CD8-positive, alpha-beta T cell (primary cell): ENCODE measurements at regions of chr9 and their contacts with region 1.

Region 1: GRCh38 chr9:19239955-19240354 is 9.5 kb downstream of the DENND4C start:
- DNase-seq: no peak
- ATAC-seq: no peak
- H3K4me3 ChIP-seq: no peak overlapping the region
- H3K4me3 Mint-ChIP-seq: no peak overlapping the region
- H3K27ac ChIP-seq: no peak overlapping the region
- H3K27ac Mint-ChIP-seq: no peak overlapping the region
- H3K4me1 ChIP-seq: no peaks in the 10 kb centered on the region
- H3K4me1 Mint-ChIP-seq: peaks cover 54% of the 10 kb centered on the region
- H3K27me3 ChIP-seq: no peaks in the 10 kb centered on the region
- H3K27me3 Mint-ChIP-seq: no peaks in the 10 kb centered on the region
- CTCF ChIP-seq: no peak

Region 2: DNA sequence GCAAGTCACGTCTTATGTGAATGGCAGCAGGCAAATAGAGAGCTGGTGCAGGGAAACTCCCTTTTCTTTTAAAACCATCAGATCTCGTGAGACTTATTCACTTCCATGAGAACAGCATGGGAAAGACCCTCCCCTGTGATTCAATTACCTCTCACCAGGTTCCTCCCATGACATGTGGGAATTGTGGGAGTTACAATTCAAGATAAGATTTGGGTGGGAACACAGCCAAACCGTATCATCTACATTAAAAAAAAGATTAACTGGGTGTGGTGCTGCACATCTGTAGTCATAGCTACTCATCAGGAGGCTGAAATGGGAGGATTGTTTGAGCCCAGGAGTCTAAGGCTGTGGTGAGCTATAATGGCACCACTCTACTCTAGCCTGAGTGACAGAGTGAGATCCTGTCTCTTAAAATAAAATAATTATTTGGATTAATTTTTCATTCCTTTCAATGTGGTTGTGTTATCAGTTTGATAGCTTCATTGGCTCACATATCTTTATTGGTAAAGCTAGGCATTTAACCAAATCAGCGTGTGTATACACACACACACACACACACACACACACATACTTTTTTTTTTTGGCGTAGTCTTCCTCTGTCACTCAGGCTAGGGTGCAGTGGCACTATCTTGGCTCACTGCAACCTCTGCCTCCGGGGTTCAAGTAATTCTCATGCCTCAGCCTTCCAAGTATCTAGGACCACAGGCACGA is 12.4 kb after region 1 on chr9:
- CTCF ChIA-PET with region 1: interaction called, 4 read pairs
- POLR2A ChIA-PET with region 1: interaction called, 6 read pairs
- intact Hi-C with region 1: loop called in 1 of 2 experiments (anchors 2 kb)
- DNase-seq: no peak
- ATAC-seq: no peak
- H3K4me3 ChIP-seq: no peak overlapping the region
- H3K4me3 Mint-ChIP-seq: no peak overlapping the region
- H3K27ac ChIP-seq: no peak overlapping the region
- H3K27ac Mint-ChIP-seq: no peak overlapping the region
- H3K4me1 ChIP-seq: peaks cover 10% of the 10 kb centered on the region
- H3K4me1 Mint-ChIP-seq: peaks cover 65% of the 10 kb centered on the region
- H3K27me3 ChIP-seq: no peaks in the 10 kb centered on the region
- H3K27me3 Mint-ChIP-seq: no peaks in the 10 kb centered on the region
- CTCF ChIP-seq: no peak